ENCODE measurements at regions of chr13 and their contacts with region 1.

Region 1: DNA sequence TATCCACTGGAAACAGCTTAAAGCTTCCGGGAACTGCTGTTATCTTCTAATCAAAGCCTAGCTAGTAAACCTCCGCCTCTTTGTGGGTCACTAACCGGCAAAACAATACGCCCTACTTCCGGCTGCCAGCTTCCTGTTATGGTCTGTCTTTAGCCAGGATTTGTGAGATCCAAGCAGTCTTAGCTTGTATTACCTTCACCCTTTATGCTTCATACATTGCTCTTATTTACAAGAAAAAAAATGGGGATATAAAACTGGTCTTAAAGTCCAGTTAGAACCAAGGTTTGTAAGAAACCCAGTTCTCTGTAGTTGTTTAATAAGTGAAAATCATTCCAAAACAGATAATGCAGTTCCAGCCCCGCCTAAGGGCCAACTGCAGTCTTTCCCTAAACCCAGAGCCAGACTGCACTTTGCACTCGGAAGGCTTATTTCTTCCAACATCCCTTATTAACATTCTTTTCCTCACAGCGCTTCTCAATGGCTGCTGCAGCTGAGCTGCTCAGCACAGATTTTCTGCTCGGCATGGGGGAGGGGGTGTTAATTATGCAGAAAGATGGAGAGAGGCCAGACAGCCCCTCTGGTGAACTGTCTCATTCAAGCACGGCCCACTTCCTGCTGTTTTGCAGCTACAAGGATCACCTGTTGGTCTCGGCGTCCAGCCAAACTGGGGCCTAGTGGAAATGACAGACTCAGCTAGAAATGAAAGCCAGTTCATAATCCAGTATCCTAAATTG is 368.4 kb downstream of the KLF12 start:
- DNase-seq: peak; percentile 95
- H3K4me3 ChIP-seq: peak overlapping the region in 1 of 3 experiments; percentile 10
- H3K27ac ChIP-seq: peak overlapping the region; percentile 62
- H3K4me1 ChIP-seq: peaks cover 33% of the 10 kb centered on the region
- H3K27me3 ChIP-seq: no peaks in the 10 kb centered on the region
- CTCF ChIP-seq: no peak
- POLR2A ChIP-seq: no peak

Region 2: GRCh38 chr13:73754727-73755292 is 11.0 kb before region 1 on chr13:
- CTCF ChIA-PET with region 1: interaction called, 19 read pairs
- POLR2A ChIA-PET with region 1: no interaction called
- dilution Hi-C with region 1: no loop called
- intact Hi-C with region 1: no loop called
- DNase-seq: peak; percentile 79
- H3K4me3 ChIP-seq: no peak overlapping the region
- H3K27ac ChIP-seq: no peak overlapping the region
- H3K4me1 ChIP-seq: no peaks in the 10 kb centered on the region
- H3K27me3 ChIP-seq: no peaks in the 10 kb centered on the region
- CTCF ChIP-seq: peak; percentile 36 to 51
- POLR2A ChIP-seq: no peak

Region 3: GRCh38 chr13:73849292-73849691 is 83.5 kb after region 1 on chr13:
- CTCF ChIA-PET with region 1: no interaction called
- POLR2A ChIA-PET with region 1: interaction called, 3 read pairs
- dilution Hi-C with region 1: no loop called
- intact Hi-C with region 1: loop called (anchors 5 kb)
- DNase-seq: peak; percentile 36
- H3K4me3 ChIP-seq: no peak overlapping the region
- H3K27ac ChIP-seq: no peak overlapping the region
- H3K4me1 ChIP-seq: peaks cover 8% of the 10 kb centered on the region
- H3K27me3 ChIP-seq: no peaks in the 10 kb centered on the region
- CTCF ChIP-seq: peak; percentile 21 to 24
- POLR2A ChIP-seq: no peak

Region 4: GRCh38 chr13:73970421-73971055 is 204.7 kb after region 1 on chr13:
- CTCF ChIA-PET with region 1: no interaction called
- POLR2A ChIA-PET with region 1: no interaction called
- dilution Hi-C with region 1: no loop called
- intact Hi-C with region 1: no loop called
- DNase-seq: no peak
- H3K4me3 ChIP-seq: no peak overlapping the region
- H3K27ac ChIP-seq: no peak overlapping the region
- H3K4me1 ChIP-seq: no peaks in the 10 kb centered on the region
- H3K27me3 ChIP-seq: no peaks in the 10 kb centered on the region
- CTCF ChIP-seq: no peak
- POLR2A ChIP-seq: no peak

Region 5: GRCh38 chr13:74115138-74115537 is 349.3 kb after region 1 on chr13:
- CTCF ChIA-PET with region 1: no interaction called
- POLR2A ChIA-PET with region 1: no interaction called
- dilution Hi-C with region 1: no loop called
- intact Hi-C with region 1: loop called (anchors 5 kb)
- DNase-seq: peak; percentile 88
- H3K4me3 ChIP-seq: no peak overlapping the region
- H3K27ac ChIP-seq: peak overlapping the region; percentile 71
- H3K4me1 ChIP-seq: peaks cover 55% of the 10 kb centered on the region
- H3K27me3 ChIP-seq: no peaks in the 10 kb centered on the region
- CTCF ChIP-seq: no peak
- POLR2A ChIP-seq: no peak

Region 6: DNA sequence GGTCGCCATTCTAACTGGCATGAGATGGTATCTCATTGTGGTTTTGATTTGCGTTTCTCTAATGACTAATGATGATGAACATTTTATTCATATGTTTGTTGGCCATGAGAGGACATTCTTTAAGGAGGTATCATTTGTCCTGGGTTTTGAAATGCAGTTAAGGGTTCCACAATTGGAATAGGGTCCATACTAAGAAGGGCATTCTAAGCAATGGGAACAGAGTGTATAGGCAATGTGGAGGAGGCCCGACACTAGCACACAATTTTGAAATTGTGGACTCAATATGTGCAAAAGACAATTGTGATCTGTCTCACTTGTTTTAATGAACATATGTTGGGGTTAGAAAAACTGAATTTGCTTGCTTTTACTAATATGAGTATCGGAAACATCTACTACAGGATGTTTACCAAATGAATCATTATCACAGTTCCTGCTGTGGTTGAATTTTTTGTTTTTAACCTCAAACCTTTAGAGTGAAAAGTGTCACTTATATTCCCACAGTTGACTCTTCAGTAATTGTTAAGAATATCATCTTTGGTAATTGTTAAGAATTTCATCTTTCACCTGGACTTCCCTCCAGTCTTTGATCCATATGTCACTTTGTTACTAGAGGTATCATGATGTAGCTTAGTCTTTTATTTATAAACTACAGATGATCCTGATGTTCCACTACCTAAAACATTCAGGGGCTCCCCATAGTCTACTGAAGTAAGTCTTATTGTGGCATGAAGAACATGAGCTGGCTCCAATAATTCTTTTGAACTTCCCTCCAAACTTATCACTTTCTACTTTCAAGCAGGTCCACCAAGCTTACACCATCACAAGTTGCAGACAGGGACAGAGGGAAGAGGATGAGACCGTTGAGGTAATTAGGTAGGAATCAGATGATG is 478.1 kb after region 1 on chr13:
- CTCF ChIA-PET with region 1: no interaction called
- POLR2A ChIA-PET with region 1: no interaction called
- dilution Hi-C with region 1: no loop called
- intact Hi-C with region 1: loop called (anchors 5 kb)
- DNase-seq: peak; percentile 59
- H3K4me3 ChIP-seq: no peak overlapping the region
- H3K27ac ChIP-seq: peak overlapping the region; percentile 77
- H3K4me1 ChIP-seq: peaks cover 13% of the 10 kb centered on the region
- H3K27me3 ChIP-seq: no peaks in the 10 kb centered on the region
- CTCF ChIP-seq: no peak
- POLR2A ChIP-seq: no peak